SK-N-SH (cell line): ENCODE measurements at regions of chr17 and their contacts with region 1.

Region 1: GRCh38 chr17:70168977-70169708 is at the start of gene KCNJ2:
- DNase-seq: peak; percentile 97
- H3K4me3 ChIP-seq: peak within 1 kb of the TSS; percentile 85 to 86
- H3K27ac ChIP-seq: peak within 1 kb of the TSS; percentile 46 to 78
- H3K4me1 ChIP-seq: peaks cover 3 to 33% of the 10 kb centered on the region in 2 experiments; a peak in 3 of 4 replicates
- H3K27me3 ChIP-seq: no peaks in the 10 kb centered on the region
- CTCF ChIP-seq: no peak
- EP300 ChIP-seq: peak; percentile 17 to 42; a peak in 2 of 4 replicates
- RAD21 ChIP-seq: peak; percentile 9; the same call in 1 of the 2 replicates
- polyA plus RNA-seq, gene KCNJ2: 0.18 and 0.21 TPM in 2 replicates

Region 2: GRCh38 chr17:70158180-70158579 is 11.0 kb before region 1 on chr17:
- CTCF ChIA-PET with region 1: interaction called, 32 read pairs
- POLR2A ChIA-PET with region 1: no interaction called
- DNase-seq: no peak
- H3K4me3 ChIP-seq: no peak overlapping the region
- H3K27ac ChIP-seq: no peak overlapping the region
- H3K4me1 ChIP-seq: peaks cover 0 to 14% of the 10 kb centered on the region in 2 experiments; a peak in 2 of 4 replicates
- H3K27me3 ChIP-seq: no peaks in the 10 kb centered on the region
- CTCF ChIP-seq: no peak
- EP300 ChIP-seq: no peak
- RAD21 ChIP-seq: no peak